Cardiac septum (tissue), 1 donor: ENCODE measurements at regions of chr5 and their contacts with region 1.

Region 1: GRCh38 chr5:40834849-40835787 is at the start of gene RPL37:
- DNase-seq: peak; percentile 98
- total RNA-seq, gene RPL37: 510 TPM

Region 2: DNA sequence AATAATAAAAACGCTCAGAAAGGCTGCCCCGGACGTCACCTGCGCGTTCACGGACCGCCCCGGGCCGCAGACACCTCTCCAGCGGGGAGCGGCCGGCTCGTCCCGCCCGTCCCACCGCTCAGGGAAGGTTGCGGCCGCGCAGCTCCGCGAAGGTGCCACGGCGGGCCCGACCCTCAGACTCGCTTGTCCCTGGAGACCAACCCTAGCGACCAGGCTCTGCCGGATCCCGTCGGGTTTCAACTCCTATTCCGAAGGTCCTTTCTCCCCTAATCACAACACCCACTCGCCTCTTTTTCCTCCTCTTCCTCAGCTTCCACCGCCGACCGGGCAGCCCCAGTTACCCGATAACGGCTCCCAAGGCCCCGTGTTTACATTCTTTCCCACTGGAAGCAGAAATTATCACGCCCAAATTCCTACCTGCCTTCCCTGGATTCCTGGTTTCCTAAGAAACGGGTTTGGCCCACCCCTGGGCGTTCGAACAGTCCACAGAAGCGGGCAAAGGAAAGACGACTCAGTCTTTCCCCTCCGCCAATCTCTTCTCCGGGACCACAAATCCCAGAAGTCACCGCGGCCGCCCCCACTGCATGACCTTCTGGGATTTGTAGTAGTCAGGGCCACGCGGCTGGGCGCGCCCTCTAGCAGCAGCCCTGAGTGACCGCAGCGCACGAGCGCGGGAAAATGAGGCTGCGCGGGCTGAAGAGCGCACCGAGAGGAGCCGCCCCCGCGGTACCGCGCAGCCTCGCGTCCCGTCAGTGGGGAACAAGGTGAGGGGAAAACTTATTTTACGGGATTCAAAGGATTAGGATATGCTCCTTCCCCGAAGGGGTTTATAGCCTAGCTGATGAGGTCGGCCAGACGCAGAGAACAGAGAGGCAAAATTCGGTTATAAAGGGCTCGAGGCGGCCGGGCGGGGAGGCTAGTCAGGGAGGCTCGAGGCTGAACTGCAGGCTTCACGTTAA is 79.4 kb before region 1 on chr5 and contains the start of gene TTC33:
- intact Hi-C with region 1: loop called (anchors 1 kb)
- DNase-seq: peak; percentile 99
- total RNA-seq, gene TTC33: 19.1 TPM

Region 3: GRCh38 chr5:40798012-40798855 is 36.9 kb before region 1 on chr5 and contains the start of gene PRKAA1:
- intact Hi-C with region 1: loop called (anchors 1 kb)
- DNase-seq: peak; percentile 95
- total RNA-seq, gene PRKAA1: 50.5 TPM

Region 4: GRCh38 chr5:41143131-41143901 is 308.2 kb after region 1 on chr5:
- intact Hi-C with region 1: no loop called
- DNase-seq: no peak